ENCODE measurements at regions of chr6 and their contacts with region 1.

Region 1: GRCh38 chr6:134123666-134124208 is 71.3 kb upstream of the SLC2A12 start:
- DNase-seq: peak; percentile 31
- ATAC-seq: peak; percentile 47
- H3K4me3 Mint-ChIP-seq: no peak overlapping the region
- H3K27ac Mint-ChIP-seq: no peak overlapping the region
- H3K4me1 Mint-ChIP-seq: no peaks in the 10 kb centered on the region
- H3K27me3 Mint-ChIP-seq: peaks cover 2% of the 10 kb centered on the region

Region 2: GRCh38 chr6:133715270-133715669 is 408.5 kb before region 1 on chr6:
- CTCF ChIA-PET with region 1: no interaction called
- POLR2A ChIA-PET with region 1: no interaction called
- DNase-seq: no peak
- ATAC-seq: no peak
- H3K4me3 Mint-ChIP-seq: no peak overlapping the region
- H3K27ac Mint-ChIP-seq: no peak overlapping the region
- H3K4me1 Mint-ChIP-seq: peaks cover 4% of the 10 kb centered on the region
- H3K27me3 Mint-ChIP-seq: peaks cover 4% of the 10 kb centered on the region

Region 3: DNA sequence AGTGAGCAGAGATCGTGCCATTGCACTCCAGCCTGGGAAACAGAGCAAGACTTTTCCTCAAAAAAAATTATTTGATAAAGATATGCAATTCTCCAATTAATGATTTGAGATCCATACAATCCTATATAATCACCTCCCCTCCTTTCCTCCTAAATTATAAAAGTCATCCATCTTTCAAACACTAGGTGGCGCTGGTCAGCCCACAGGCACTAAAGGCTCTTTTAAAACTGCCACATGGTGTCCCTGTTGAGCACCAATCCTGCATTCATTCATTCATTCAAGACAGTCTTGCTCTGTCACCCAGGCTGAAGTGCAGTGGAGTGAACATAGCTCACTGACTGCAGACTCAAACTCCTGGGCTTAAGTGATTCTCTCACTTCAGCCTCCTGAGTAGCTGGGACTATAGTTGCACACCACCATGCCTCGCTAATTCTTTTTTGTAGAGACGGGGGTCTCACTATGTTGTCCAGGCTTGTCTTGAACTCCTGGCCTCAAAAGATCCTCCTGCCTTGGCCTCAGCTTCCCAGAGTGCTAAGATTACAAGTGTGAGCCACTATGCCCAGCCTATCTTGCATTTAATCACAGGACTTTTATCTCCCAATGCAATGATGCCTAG is 12.6 kb before region 1 on chr6:
- CTCF ChIA-PET with region 1: interaction called, 43 read pairs
- POLR2A ChIA-PET with region 1: no interaction called
- DNase-seq: peak; percentile 62
- ATAC-seq: peak; percentile 60
- H3K4me3 Mint-ChIP-seq: no peak overlapping the region
- H3K27ac Mint-ChIP-seq: no peak overlapping the region
- H3K4me1 Mint-ChIP-seq: peaks cover 5% of the 10 kb centered on the region
- H3K27me3 Mint-ChIP-seq: peaks cover 24% of the 10 kb centered on the region

Region 4: GRCh38 chr6:134138226-134138975 is 14.7 kb after region 1 on chr6:
- CTCF ChIA-PET with region 1: interaction called, 16 read pairs
- POLR2A ChIA-PET with region 1: no interaction called
- DNase-seq: no peak
- ATAC-seq: no peak
- H3K4me3 Mint-ChIP-seq: no peak overlapping the region
- H3K27ac Mint-ChIP-seq: no peak overlapping the region
- H3K4me1 Mint-ChIP-seq: no peaks in the 10 kb centered on the region
- H3K27me3 Mint-ChIP-seq: peaks cover 2% of the 10 kb centered on the region

Region 5: GRCh38 chr6:134145786-134146185 is 22.0 kb after region 1 on chr6:
- CTCF ChIA-PET with region 1: interaction called, 16 read pairs
- POLR2A ChIA-PET with region 1: no interaction called
- DNase-seq: no peak
- ATAC-seq: no peak
- H3K4me3 Mint-ChIP-seq: no peak overlapping the region
- H3K27ac Mint-ChIP-seq: no peak overlapping the region
- H3K4me1 Mint-ChIP-seq: no peaks in the 10 kb centered on the region
- H3K27me3 Mint-ChIP-seq: peaks cover 2% of the 10 kb centered on the region

Region 6: DNA sequence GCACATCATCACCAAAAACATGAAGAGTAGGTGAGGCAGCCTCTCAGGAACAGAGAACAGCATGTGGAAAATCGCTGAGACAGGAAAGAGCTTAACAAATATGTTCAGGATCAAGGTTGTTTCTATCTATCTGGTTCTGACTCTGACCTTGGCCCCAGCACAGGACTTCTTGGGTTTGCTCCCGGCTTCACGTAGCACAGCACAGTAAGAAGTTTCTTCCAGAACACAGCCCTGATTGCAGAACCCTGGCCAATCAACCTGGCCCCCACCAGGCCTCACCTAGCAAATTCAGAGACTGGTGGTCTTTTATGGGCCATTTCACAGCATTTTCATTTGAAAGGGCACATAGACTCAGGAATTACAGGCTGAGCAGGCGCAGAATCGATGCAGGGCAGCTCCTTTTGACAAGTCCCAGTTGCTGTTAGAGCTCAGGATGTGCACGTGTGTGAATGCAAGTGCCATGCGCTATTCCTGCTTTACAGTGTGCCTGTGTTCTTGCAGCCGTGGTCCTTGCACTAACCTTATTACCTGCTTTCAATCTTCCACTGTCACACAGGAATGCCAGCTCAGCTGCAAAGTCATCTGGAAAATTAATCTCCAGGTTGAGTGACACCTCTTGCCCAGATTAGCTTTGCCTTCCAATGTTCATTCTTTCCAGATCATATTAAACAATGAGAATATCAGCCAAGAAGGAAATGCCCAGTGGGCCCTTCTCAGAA is 29.2 kb after region 1 on chr6:
- CTCF ChIA-PET with region 1: interaction called, 15 read pairs
- POLR2A ChIA-PET with region 1: no interaction called
- DNase-seq: no peak
- ATAC-seq: no peak
- H3K4me3 Mint-ChIP-seq: no peak overlapping the region
- H3K27ac Mint-ChIP-seq: no peak overlapping the region
- H3K4me1 Mint-ChIP-seq: no peaks in the 10 kb centered on the region
- H3K27me3 Mint-ChIP-seq: no peaks in the 10 kb centered on the region